CD4-positive, alpha-beta T cell (primary cell): ENCODE measurements at regions of chr3 and their contacts with region 1.

Region 1: GRCh38 chr3:71360764-71361163 is 222.8 kb downstream of the FOXP1 start:
- DNase-seq: peak in 2 of 14 experiments; percentile 22 to 36
- ATAC-seq: peak; percentile 55
- H3K4me3 ChIP-seq: peak overlapping the region; percentile 5
- H3K4me3 Mint-ChIP-seq: peak overlapping the region; percentile 72
- H3K27ac ChIP-seq: peak overlapping the region; percentile 10 to 50
- H3K27ac Mint-ChIP-seq: peak overlapping the region; percentile 76
- H3K4me1 ChIP-seq: peaks cover 50% of the 10 kb centered on the region
- H3K4me1 Mint-ChIP-seq: peaks cover 86% of the 10 kb centered on the region
- H3K27me3 ChIP-seq: no peaks in the 10 kb centered on the region
- H3K27me3 Mint-ChIP-seq: no peaks in the 10 kb centered on the region
- CTCF ChIP-seq: no peak

Region 2: DNA sequence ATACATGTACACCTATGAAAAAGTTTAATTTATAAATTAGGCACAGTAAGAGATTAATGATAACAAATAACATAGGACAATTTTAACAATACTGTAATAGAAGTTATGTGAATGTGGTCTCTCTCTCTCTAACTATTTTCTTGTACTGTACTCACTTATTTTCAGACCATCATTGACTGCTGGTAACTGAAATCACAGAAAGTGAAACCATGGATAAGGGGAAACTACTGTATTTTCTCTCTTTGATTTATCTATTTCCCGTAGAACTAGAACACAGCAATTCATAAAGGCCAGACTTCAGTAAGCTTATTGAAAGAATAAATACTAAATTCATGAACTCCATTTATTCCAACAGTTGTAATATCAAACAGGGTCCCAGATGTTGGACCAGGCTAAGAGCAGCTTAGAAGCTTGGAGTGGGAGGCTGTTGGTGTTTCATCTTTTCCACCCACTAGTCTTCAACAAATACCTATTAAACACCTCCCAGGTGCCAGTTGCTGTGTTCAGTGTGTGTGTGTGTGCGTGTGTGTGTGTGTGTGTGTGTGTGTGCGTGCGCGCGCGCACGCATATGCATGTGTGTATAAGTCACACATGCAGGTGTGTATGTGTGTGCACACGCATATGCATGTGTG is 12.6 kb before region 1 on chr3:
- CTCF ChIA-PET with region 1: no interaction called
- POLR2A ChIA-PET with region 1: interaction called, 5 read pairs
- intact Hi-C with region 1: loop called in 1 of 2 experiments (anchors 1 kb)
- DNase-seq: peak in 1 of 14 experiments; percentile 19
- ATAC-seq: peak; percentile 51
- H3K4me3 ChIP-seq: no peak overlapping the region
- H3K4me3 Mint-ChIP-seq: peak overlapping the region; percentile 67
- H3K27ac ChIP-seq: no peak overlapping the region
- H3K27ac Mint-ChIP-seq: peak overlapping the region; percentile 82
- H3K4me1 ChIP-seq: peaks cover 9% of the 10 kb centered on the region
- H3K4me1 Mint-ChIP-seq: peaks cover 73% of the 10 kb centered on the region
- H3K27me3 ChIP-seq: no peaks in the 10 kb centered on the region
- H3K27me3 Mint-ChIP-seq: no peaks in the 10 kb centered on the region
- CTCF ChIP-seq: no peak